ENCODE measurements at regions of chr2 and their contacts with region 1.

Region 1: DNA sequence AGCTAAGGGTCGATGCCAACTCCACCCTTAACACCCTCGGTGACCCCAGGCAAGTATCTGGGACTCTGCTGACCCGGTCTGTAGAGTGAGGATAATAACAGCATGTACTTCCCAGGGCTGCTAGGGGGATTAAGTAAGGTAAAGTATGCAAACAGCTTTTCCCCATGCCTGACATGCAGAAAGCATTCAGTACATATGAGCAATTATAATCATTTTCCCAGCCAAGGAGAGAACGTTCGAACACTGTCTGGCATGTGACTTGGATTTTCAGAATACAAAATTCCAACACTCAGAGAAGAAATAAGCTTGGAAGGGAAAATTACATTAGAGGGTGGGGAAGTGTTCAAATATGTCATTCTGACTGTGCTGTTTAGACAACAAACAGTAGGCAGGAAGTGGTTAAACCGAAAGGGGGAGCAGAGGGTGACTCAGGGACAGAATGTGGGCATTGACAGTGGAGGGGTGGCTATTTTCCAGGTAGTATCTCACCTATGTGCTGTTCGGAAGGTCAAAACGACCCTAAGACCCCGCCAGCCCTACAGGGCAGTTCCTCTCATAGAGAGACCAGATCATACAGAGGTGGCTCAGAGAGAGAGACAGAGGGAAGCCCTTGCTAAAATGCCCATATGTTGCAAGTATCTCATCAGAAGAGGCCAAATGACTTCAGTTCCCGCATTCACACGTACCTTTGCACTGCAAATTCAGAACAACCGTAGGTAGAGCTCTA is 14.9 kb downstream of the ASPRV1 start:
- DNase-seq: peak; percentile 82
- ATAC-seq: peak; percentile 62
- H3K4me3 ChIP-seq: peak overlapping the region; percentile 46 to 59 (median 48)
- H3K27ac ChIP-seq: peak overlapping the region; percentile 51
- H3K4me1 ChIP-seq: peaks cover 42% of the 10 kb centered on the region
- H3K27me3 ChIP-seq: no peaks in the 10 kb centered on the region
- CTCF ChIP-seq: 0 out of 2 replicates have a peak, but pooled peaks have one; percentile 7
- EP300 ChIP-seq: peak in 1 of 2 experiments; percentile 89; a peak in 2 of 4 replicates
- POLR2A ChIP-seq: no peak
- RAD21 ChIP-seq: no peak

Region 2: DNA sequence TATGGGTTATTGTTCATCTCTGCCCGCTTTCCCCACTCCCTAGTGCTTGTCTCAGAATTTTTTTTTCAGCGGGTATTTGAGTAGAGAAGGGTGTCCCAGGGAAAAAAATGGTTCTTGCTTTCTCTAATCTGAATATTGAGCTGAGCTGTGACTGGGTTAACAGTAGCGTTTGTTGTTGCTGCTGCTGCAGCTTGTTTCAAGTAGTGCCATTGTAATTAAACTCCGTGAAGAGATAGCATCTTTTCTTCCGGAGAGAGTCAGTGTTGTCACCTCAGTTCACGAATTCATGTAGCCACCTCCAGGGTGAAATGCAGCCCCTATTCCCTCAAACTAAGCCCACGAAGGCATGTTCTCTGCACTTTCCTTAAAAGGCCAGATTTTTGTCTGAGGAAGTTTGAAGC is 301.5 kb before region 1 on chr2:
- CTCF ChIA-PET with region 1: no interaction called
- POLR2A ChIA-PET with region 1: no interaction called
- in situ Hi-C with region 1: no loop called
- intact Hi-C with region 1: no loop called
- DNase-seq: no peak
- ATAC-seq: no peak
- H3K4me3 ChIP-seq: peak overlapping the region; percentile 78 to 94 (median 88); a peak in 5 of 6 replicates
- H3K27ac ChIP-seq: no peak overlapping the region
- H3K4me1 ChIP-seq: peaks cover 41% of the 10 kb centered on the region
- H3K27me3 ChIP-seq: peaks cover 0 to 3% of the 10 kb centered on the region in 2 experiments; a peak in 1 of 5 replicates
- CTCF ChIP-seq: no peak
- EP300 ChIP-seq: no peak
- POLR2A ChIP-seq: no peak
- RAD21 ChIP-seq: no peak

Region 3: GRCh38 chr2:69933839-69934613 is 12.5 kb before region 1 on chr2:
- CTCF ChIA-PET with region 1: no interaction called
- POLR2A ChIA-PET with region 1: interaction called, 22 read pairs
- in situ Hi-C with region 1: no loop called
- intact Hi-C with region 1: no loop called
- DNase-seq: peak; percentile 85
- ATAC-seq: peak; percentile 90
- H3K4me3 ChIP-seq: peak overlapping the region in 1 of 3 experiments; percentile 13; a peak in 1 of 6 replicates
- H3K27ac ChIP-seq: peak overlapping the region; percentile 55
- H3K4me1 ChIP-seq: peaks cover 34% of the 10 kb centered on the region
- H3K27me3 ChIP-seq: no peaks in the 10 kb centered on the region
- CTCF ChIP-seq: no peak
- EP300 ChIP-seq: peak in 1 of 2 experiments; percentile 92; a peak in 2 of 4 replicates
- POLR2A ChIP-seq: no peak
- RAD21 ChIP-seq: no peak

Measured in HepG2 (cell line).